PC-3 (cell line): ENCODE measurements at regions of chr6 and their contacts with region 1.

Region 1: GRCh38 chr6:38234934-38235682 is 404.6 kb downstream of the BTBD9 start:
- DNase-seq: no peak
- ATAC-seq: no peak
- H3K4me3 ChIP-seq: no peak overlapping the region
- H3K27ac ChIP-seq: no peak overlapping the region
- H3K4me1 ChIP-seq: peaks cover 38% of the 10 kb centered on the region
- H3K27me3 ChIP-seq: no peaks in the 10 kb centered on the region
- CTCF ChIP-seq: no peak

Region 2: GRCh38 chr6:38057994-38058393 is 177.1 kb before region 1 on chr6:
- CTCF ChIA-PET with region 1: no interaction called
- POLR2A ChIA-PET with region 1: no interaction called
- intact Hi-C with region 1: loop called (anchors 10 kb)
- DNase-seq: peak; percentile 58
- ATAC-seq: peak; percentile 84
- H3K4me3 ChIP-seq: no peak overlapping the region
- H3K27ac ChIP-seq: peak overlapping the region; percentile 18; the same call in 1 of the 2 replicates
- H3K4me1 ChIP-seq: peaks cover 17% of the 10 kb centered on the region
- H3K27me3 ChIP-seq: no peaks in the 10 kb centered on the region
- CTCF ChIP-seq: no peak

Region 3: GRCh38 chr6:38220069-38220723 is 14.9 kb before region 1 on chr6:
- CTCF ChIA-PET with region 1: no interaction called
- POLR2A ChIA-PET with region 1: no interaction called
- intact Hi-C with region 1: loop called (anchors 2 kb)
- DNase-seq: peak; percentile 48
- ATAC-seq: peak; percentile 90
- H3K4me3 ChIP-seq: no peak overlapping the region
- H3K27ac ChIP-seq: peak overlapping the region; percentile 8; the same call in 1 of the 2 replicates
- H3K4me1 ChIP-seq: peaks cover 21% of the 10 kb centered on the region
- H3K27me3 ChIP-seq: no peaks in the 10 kb centered on the region
- CTCF ChIP-seq: no peak

Region 4: DNA sequence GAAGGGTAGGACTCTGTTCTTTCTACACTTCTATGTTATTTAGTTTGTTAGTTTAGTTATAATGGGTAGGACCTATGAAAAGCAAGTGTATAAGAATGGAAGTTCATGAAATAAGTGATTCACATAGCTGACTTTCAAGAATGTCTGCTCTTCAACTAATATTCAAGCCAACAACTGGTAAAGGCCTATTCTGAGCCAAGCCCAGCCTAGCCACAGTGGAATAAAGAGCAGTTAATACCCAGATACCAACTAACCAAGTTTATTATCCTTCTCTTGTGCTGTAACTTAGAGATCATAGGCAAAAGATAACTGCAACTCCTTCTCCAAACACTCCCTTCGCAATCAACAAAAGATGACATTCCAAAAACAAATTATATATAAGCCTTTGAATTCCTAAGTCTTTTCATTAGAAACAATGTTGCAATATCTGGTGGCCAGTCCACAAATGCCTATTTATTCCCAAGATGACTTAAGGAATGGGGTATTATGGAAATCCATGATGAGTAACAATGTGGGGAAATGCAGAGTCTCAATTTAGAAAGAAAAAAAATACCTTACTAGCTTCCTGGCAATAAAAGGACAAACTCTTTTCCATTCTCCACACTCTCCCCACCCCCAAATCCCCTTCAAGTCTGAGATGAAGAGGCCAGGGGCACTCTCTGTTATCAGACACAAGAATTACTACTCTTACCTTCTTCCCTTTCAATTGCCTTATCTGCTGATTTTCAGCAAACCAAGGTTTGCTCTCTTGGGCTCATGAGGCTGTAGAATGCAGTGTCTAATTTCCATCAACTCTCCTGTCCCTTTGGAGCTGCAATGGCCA is 377.2 kb after region 1 on chr6:
- CTCF ChIA-PET with region 1: no interaction called
- POLR2A ChIA-PET with region 1: no interaction called
- intact Hi-C with region 1: no loop called
- DNase-seq: no peak
- ATAC-seq: no peak
- H3K4me3 ChIP-seq: no peak overlapping the region
- H3K27ac ChIP-seq: no peak overlapping the region
- H3K4me1 ChIP-seq: no peaks in the 10 kb centered on the region
- H3K27me3 ChIP-seq: no peaks in the 10 kb centered on the region
- CTCF ChIP-seq: no peak